ENCODE measurements at regions of chr12 and their contacts with region 1.

Region 1: DNA sequence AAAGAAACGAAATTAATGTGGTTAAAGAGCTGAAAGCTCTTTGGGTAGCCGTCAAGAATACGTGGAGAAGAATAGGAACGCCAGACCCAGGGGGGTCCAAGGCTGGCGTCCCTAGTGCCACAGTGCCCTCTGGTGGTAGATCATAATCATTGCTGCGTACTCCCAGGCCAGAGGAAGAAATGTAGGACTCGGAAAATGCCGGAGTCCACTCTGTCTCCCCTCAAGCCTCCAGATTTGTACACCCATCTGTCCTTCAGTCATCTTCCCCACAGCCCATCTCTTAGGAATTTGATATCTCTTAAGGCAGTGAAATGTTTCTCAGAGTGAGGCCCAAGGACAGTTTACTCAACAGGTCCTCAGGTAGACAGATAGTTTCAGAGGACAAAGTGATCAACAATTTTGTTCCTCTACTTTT is 25.4 kb upstream of the PLEKHG6 start:
- DNase-seq: peak in 33 of 35 experiments; percentile 17 to 84 (median 45)
- ATAC-seq: peak; percentile 73 to 86 (median 80)
- H3K4me3 ChIP-seq: no peak overlapping the region
- H3K4me3 Mint-ChIP-seq: no peak overlapping the region
- H3K27ac ChIP-seq: no peak overlapping the region
- H3K27ac Mint-ChIP-seq: no peak overlapping the region
- H3K4me1 ChIP-seq: peaks cover 0 to 4% of the 10 kb centered on the region in 2 experiments
- H3K4me1 Mint-ChIP-seq: peaks cover 0 to 4% (median 4%) of the 10 kb centered on the region in 3 donors
- H3K27me3 ChIP-seq: peaks cover 0 to 27% of the 10 kb centered on the region in 2 experiments
- H3K27me3 Mint-ChIP-seq: peaks cover 6 to 14% of the 10 kb centered on the region in 2 donors

Region 2: DNA sequence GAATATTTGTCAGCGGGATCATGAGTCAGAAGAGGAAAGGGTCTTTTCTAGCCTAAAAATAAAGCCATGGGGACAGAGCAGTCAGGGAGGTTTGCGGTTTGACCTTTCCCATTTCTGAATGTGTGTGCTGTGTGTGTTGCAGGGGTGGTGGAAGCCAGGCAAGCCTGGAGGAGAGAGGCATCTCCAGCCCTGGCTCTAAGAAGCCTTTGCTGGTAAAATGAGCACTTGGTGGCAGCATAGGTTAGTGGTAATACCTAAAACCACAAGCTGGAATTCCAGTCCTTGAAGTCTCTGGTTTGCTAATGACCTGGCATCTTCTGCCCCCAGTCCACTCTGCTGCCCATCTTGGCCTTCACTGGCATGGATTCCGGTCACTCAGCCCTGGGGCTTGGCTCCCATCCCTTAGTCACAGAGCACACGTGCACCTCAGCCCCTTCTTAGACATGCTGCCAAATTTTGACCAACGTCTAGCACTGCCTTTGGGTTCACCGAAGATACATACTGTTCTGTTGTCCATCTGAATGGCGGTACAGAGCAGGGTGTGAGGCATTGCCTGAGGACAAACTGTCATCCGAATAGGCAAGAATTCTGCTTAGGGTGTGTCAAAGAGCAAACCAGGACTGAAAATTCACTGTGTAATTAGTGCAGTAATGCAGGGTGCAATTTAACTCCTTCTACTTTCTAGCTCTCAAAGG is 1188.7 kb before region 1 on chr12:
- CTCF ChIA-PET with region 1: no interaction called
- POLR2A ChIA-PET with region 1: no interaction called
- DNase-seq: no peak
- ATAC-seq: no peak
- H3K4me3 ChIP-seq: no peak overlapping the region
- H3K4me3 Mint-ChIP-seq: no peak overlapping the region
- H3K27ac ChIP-seq: no peak overlapping the region
- H3K27ac Mint-ChIP-seq: no peak overlapping the region
- H3K4me1 ChIP-seq: no peaks in the 10 kb centered on the region
- H3K4me1 Mint-ChIP-seq: no peaks in the 10 kb centered on the region
- H3K27me3 ChIP-seq: peaks cover 0 to 3% of the 10 kb centered on the region in 2 experiments
- H3K27me3 Mint-ChIP-seq: peaks cover 18 to 19% of the 10 kb centered on the region in 2 donors

Region 3: DNA sequence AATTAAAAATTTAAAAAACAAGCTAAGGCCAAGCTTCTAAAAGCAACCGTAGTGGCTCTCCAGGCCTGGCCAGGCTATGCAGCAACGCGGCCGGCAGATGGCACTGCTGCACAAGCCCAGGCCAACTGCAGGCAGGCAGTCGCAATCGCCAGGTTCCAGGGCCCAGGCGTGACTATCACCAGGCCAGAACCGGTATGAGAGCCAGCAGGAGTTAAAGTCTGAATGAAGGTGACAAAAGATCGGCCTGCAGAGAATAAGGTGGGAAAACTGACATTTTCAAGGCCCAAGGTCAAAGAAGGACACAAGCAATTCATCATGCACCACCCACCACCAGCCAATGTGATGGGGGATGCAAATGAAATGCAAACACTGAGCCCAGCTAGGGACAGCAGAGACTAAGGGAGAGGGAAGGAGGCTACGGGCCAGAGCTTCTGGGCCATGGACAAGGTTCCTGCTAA is 296.4 kb before region 1 on chr12:
- CTCF ChIA-PET with region 1: interaction called, 17 to 34 read pairs
- POLR2A ChIA-PET with region 1: no interaction called
- DNase-seq: peak; percentile 24 to 79 (median 59)
- ATAC-seq: peak; percentile 81 to 89 (median 86)
- H3K4me3 ChIP-seq: no peak overlapping the region
- H3K4me3 Mint-ChIP-seq: no peak overlapping the region
- H3K27ac ChIP-seq: no peak overlapping the region
- H3K27ac Mint-ChIP-seq: no peak overlapping the region
- H3K4me1 ChIP-seq: no peaks in the 10 kb centered on the region
- H3K4me1 Mint-ChIP-seq: no peaks in the 10 kb centered on the region
- H3K27me3 ChIP-seq: peaks cover 0 to 5% of the 10 kb centered on the region in 2 experiments
- H3K27me3 Mint-ChIP-seq: peaks cover 0 to 1% of the 10 kb centered on the region in 2 donors

Region 4: GRCh38 chr12:6140651-6141447 is 144.2 kb before region 1 on chr12:
- CTCF ChIA-PET with region 1: no interaction called
- POLR2A ChIA-PET with region 1: interaction called in 1 of 2 experiments, 10 read pairs
- DNase-seq: peak in 32 of 35 experiments; percentile 3 to 69 (median 30)
- ATAC-seq: peak; percentile 85 to 97 (median 93)
- H3K4me3 ChIP-seq: peak overlapping the region in 1 of 2 donors; percentile 32
- H3K4me3 Mint-ChIP-seq: peak overlapping the region; percentile 53 to 67 (median 56)
- H3K27ac ChIP-seq: peak overlapping the region; percentile 69
- H3K27ac Mint-ChIP-seq: peak overlapping the region; percentile 98 to 99
- H3K4me1 ChIP-seq: peaks cover 32 to 61% of the 10 kb centered on the region in 2 experiments
- H3K4me1 Mint-ChIP-seq: peaks cover 47 to 49% (median 48%) of the 10 kb centered on the region in 3 donors
- H3K27me3 ChIP-seq: peaks cover 0 to 8% of the 10 kb centered on the region in 2 experiments
- H3K27me3 Mint-ChIP-seq: peaks cover 0 to 1% of the 10 kb centered on the region in 2 donors

Region 5: DNA sequence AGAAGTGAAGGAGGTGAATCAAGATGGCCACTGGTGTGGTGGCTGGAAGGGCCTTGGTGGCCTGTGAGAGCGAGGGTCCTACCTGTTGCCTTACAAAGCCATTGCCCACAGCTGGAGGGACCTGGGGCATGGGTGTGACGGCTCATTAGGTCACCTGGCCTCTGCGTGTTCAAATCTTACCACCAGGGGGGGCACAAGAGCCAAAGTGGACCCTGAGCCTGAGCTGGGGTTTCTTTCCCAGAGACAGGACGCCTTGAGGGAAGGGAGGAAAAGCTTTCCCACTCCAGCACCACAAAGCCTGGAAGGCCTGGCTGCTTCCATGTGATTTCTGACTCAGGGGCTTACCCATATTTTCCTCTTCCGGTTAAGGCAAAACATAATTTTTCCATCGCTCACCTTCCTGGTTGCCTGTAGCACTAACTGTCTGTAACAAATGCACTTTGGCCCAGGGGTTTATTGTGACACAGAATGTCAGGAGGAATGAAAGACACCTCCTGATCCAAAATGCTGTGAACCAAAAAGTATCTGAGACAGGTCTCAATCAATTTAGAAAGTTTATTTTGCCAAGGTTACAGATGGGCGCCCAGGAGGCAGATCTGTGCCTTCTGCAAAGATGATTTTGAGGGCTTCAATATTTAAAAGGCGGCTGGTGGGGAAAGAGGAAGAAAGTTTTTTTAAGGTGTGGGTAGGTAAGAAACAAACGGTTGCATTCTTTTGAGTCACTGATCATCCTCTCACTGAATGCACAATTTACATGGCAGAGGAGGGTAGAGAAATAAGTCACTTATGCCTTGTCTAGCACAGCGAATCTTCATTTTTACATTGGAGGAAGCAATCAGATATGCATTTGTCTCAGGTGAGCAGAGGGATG is 89.2 kb before region 1 on chr12:
- CTCF ChIA-PET with region 1: interaction called, 6 to 23 read pairs
- POLR2A ChIA-PET with region 1: no interaction called
- DNase-seq: peak; percentile 22 to 82 (median 62)
- ATAC-seq: peak; percentile 69 to 80 (median 78)
- H3K4me3 ChIP-seq: no peak overlapping the region
- H3K4me3 Mint-ChIP-seq: no peak overlapping the region
- H3K27ac ChIP-seq: no peak overlapping the region
- H3K27ac Mint-ChIP-seq: peak overlapping the region; percentile 45 to 70
- H3K4me1 ChIP-seq: peaks cover 0 to 18% of the 10 kb centered on the region in 2 experiments
- H3K4me1 Mint-ChIP-seq: peaks cover 10 to 11% (median 10%) of the 10 kb centered on the region in 3 donors
- H3K27me3 ChIP-seq: peaks cover 0 to 34% of the 10 kb centered on the region in 2 experiments
- H3K27me3 Mint-ChIP-seq: peaks cover 6 to 30% of the 10 kb centered on the region in 2 donors

Region 6: DNA sequence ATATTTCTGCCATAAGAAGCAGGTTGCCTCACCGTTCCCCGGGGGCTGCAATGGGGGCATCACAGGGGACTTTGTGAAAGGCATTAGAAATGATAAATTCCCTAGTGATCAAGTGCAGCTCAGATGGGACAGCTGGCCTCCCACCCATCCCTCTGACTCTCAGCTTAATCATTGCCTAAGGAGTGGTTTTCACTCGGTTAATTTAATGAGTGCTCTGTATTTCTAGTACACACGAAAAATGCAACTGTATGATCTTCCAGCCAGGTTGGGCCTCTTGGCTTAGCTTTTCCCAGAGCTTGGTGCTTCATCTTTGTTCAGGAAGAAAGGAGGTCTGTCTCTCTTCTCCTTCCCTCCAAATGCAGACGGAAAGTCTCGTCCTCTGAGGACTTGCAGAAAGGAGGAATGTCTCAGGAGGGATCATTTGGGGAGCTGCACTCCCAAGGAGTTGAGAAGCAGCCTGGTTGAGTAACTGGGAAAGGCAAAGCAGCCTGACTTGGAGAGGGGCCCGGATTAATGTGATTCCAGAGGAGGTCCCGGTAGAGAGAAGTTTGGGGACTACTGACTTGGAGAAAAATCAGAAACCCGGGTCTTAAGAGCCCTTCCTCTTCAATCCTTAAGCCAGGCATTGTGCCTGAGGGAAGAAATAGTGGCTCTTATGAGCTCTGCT is 77.7 kb before region 1 on chr12:
- CTCF ChIA-PET with region 1: no interaction called
- POLR2A ChIA-PET with region 1: no interaction called
- DNase-seq: no peak
- ATAC-seq: no peak
- H3K4me3 ChIP-seq: no peak overlapping the region
- H3K4me3 Mint-ChIP-seq: no peak overlapping the region
- H3K27ac ChIP-seq: no peak overlapping the region
- H3K27ac Mint-ChIP-seq: no peak overlapping the region
- H3K4me1 ChIP-seq: peaks cover 0 to 3% of the 10 kb centered on the region in 2 experiments
- H3K4me1 Mint-ChIP-seq: peaks cover 5 to 13% (median 10%) of the 10 kb centered on the region in 3 donors
- H3K27me3 ChIP-seq: peaks cover 0 to 29% of the 10 kb centered on the region in 2 experiments
- H3K27me3 Mint-ChIP-seq: peaks cover 14 to 35% of the 10 kb centered on the region in 2 donors

Region 7: DNA sequence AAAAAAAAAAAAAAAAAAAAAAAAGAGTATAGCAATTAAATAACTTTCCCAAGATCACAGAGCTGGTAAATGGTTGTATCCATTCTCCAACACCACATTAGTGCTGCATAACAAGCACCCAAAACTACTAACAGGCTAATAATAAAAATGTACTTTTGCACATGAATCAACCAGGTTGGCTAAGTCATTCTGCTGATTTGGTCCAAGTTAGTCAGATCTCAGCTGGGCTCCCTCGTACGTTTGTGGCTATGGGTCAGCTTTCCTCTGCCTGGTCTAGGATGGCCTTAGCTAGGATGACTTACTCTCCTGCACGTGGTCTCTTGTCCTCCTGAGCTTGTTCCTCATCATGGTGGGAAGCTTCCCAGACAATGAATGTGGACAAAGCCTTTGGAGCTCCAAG is 17.6 kb after region 1 on chr12:
- CTCF ChIA-PET with region 1: no interaction called
- POLR2A ChIA-PET with region 1: interaction called, 3 to 11 read pairs
- DNase-seq: no peak
- ATAC-seq: no peak
- H3K4me3 ChIP-seq: no peak overlapping the region
- H3K4me3 Mint-ChIP-seq: no peak overlapping the region
- H3K27ac ChIP-seq: no peak overlapping the region
- H3K27ac Mint-ChIP-seq: no peak overlapping the region
- H3K4me1 ChIP-seq: no peaks in the 10 kb centered on the region
- H3K4me1 Mint-ChIP-seq: no peaks in the 10 kb centered on the region
- H3K27me3 ChIP-seq: peaks cover 0 to 19% of the 10 kb centered on the region in 2 experiments
- H3K27me3 Mint-ChIP-seq: peaks cover 4% of the 10 kb centered on the region in 2 donors

Region 8: DNA sequence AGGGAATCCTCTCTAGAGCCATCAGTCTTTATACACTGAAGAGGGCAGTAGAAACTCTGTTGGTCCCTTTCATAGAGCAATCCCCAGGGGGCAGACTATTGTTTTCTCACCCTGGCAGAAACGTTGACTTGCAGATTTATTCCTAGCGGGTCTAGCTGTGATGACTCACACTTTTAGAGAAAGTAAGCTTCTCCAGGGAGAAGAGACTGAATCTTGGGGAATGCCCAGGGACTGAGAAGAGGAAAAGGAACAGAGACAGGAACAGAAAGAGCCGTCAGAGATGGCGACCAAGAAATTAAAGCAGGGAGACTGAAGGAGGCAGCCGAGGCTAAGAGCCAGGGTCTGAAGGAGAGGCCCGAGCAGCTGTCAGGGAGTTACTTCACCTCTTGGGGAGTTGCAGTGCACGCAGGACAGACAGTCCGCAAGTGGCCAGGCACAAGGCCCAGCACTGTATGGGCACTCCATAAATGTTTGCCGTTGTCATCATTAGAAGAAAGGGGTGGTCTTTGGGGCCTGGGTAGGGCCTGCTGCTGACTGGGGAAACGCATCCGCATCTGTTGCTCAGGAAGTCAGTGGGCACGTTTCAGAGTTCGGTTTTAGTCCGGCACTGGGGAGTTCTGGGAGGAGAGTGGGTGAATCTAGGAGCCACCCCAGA is 38.4 kb after region 1 on chr12:
- CTCF ChIA-PET with region 1: no interaction called
- POLR2A ChIA-PET with region 1: no interaction called
- DNase-seq: peak in 18 of 35 experiments; percentile 17 to 76 (median 43)
- ATAC-seq: peak; percentile 79 to 86 (median 80)
- H3K4me3 ChIP-seq: peak overlapping the region in 1 of 2 donors; percentile 25
- H3K4me3 Mint-ChIP-seq: peak overlapping the region; percentile 72 to 74 (median 74)
- H3K27ac ChIP-seq: peak overlapping the region; percentile 66
- H3K27ac Mint-ChIP-seq: peak overlapping the region; percentile 95 to 97
- H3K4me1 ChIP-seq: peaks cover 11 to 52% of the 10 kb centered on the region in 2 experiments
- H3K4me1 Mint-ChIP-seq: peaks cover 51 to 57% (median 53%) of the 10 kb centered on the region in 3 donors
- H3K27me3 ChIP-seq: peaks cover 0 to 7% of the 10 kb centered on the region in 2 experiments
- H3K27me3 Mint-ChIP-seq: no peaks in the 10 kb centered on the region